ENCODE measurements at regions of chr7 and their contacts with region 1.

Region 1: DNA sequence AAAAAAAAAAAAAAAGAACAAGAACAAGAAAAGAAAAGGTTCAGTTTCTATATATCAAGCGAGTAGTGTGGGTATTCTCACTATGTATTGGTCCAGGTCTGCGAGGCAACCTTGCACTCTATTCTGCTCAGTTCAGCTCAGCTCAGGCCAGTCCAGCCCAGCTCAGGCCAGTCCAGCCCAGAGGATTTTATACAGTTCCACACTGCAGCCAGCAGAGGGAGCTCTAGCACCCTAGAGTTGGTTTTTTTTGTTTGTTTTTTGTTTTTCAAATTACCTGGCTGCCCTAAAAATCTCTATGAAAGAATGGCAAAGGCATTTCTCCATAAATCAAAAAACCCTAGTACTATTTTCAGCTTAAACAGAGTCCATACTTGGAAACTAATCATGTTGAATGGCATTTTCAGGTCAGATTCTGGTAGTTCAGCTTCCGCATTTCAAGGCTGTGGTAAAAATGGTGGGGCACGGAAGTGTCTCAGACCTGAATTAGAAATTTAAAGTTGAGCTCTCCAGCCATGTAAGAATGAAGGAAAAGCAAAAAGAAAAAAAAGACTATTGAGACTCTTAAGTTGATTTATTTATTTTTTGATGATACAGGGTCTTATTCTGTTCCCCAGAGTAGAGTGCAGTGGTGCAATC is 55.2 kb upstream of the GSDME start:
- H3K4me3 ChIP-seq: no peak overlapping the region
- H3K27ac ChIP-seq: no peak overlapping the region
- H3K4me1 ChIP-seq: no peaks in the 10 kb centered on the region
- CTCF ChIP-seq: peak; percentile 42

Region 2: GRCh38 chr7:24778543-24779282 is 33.7 kb before region 1 on chr7:
- CTCF ChIA-PET with region 1: interaction called, 10 read pairs
- POLR2A ChIA-PET with region 1: no interaction called
- H3K4me3 ChIP-seq: no peak overlapping the region
- H3K27ac ChIP-seq: no peak overlapping the region
- H3K4me1 ChIP-seq: no peaks in the 10 kb centered on the region
- CTCF ChIP-seq: no peak

Region 3: GRCh38 chr7:24882989-24883621 is 70.7 kb after region 1 on chr7:
- CTCF ChIA-PET with region 1: interaction called, 12 read pairs
- POLR2A ChIA-PET with region 1: no interaction called
- H3K4me3 ChIP-seq: no peak overlapping the region
- H3K27ac ChIP-seq: no peak overlapping the region
- H3K4me1 ChIP-seq: peaks cover 32% of the 10 kb centered on the region
- CTCF ChIP-seq: no peak

Region 4: DNA sequence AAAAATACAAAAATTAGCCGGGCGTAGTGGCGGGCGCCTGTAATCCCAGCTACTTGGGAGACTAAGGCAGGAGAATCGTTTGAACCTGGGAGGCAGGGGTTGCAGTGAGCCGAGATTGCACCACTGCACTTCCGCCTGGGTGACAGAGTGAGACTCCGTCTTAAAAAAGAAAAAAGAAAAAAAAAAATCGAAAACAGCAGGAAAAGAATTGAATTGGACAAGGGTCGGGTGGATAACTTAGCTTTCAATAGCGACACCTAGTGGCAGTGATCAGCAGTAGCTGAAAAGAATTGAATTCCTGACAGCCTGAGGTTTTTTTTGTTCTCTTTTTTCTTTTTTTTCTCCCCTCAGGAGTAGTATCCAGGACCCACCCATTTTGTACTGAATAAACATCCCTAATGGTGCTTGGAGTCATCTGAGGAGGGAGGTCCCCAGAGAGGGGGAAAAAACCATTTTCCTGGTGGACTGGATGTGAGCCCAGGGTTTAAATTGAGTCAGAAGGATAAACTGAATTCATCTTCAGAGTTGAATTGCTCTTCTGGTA is 257.5 kb after region 1 on chr7:
- CTCF ChIA-PET with region 1: interaction called, 20 read pairs
- POLR2A ChIA-PET with region 1: no interaction called
- H3K4me3 ChIP-seq: no peak overlapping the region
- H3K27ac ChIP-seq: no peak overlapping the region; the same call in 1 of the 2 replicates
- H3K4me1 ChIP-seq: no peaks in the 10 kb centered on the region
- CTCF ChIP-seq: peak; percentile 49

Region 5: GRCh38 chr7:25093268-25093826 is 280.9 kb after region 1 on chr7:
- CTCF ChIA-PET with region 1: interaction called, 142 read pairs
- POLR2A ChIA-PET with region 1: no interaction called
- H3K4me3 ChIP-seq: no peak overlapping the region
- H3K27ac ChIP-seq: no peak overlapping the region
- H3K4me1 ChIP-seq: no peaks in the 10 kb centered on the region
- CTCF ChIP-seq: peak; percentile 19; the same call in 1 of the 2 replicates

Measured in HEK293 (cell line).